ENCODE measurements at regions of chr1 and their contacts with region 1.

Region 1: GRCh38 chr1:5798151-5798730 is 194.0 kb downstream of the NPHP4 start:
- DNase-seq: no peak

Region 2: GRCh38 chr1:4137621-4138415 is 1660.4 kb before region 1 on chr1:
- in situ Hi-C with region 1: loop called (anchors 25 kb)
- DNase-seq: no peak

Region 3: GRCh38 chr1:5758000-5758858 is 40.0 kb before region 1 on chr1:
- in situ Hi-C with region 1: no loop called
- DNase-seq: no peak

Region 4: DNA sequence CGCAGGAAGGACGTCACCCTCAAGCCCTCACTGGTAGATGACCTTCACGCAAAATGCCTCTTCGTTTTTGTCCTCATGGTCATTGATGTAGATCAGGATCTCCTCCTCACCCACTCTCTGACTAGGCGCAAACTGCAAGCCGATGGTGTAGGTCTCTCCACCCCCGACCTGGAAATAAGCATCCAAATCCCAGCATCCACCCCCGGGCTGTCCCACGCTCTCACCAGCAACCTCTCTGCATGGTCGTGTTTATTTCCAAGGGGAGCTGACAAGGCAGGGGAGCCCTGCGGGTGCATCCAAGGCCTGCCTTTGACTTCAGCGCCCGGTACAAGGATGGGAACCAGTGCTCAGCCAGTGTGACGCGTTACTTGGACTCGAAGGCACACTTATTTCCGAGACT is 65.0 kb after region 1 on chr1:
- in situ Hi-C with region 1: no loop called
- DNase-seq: no peak

Region 5: GRCh38 chr1:6026095-6026809 is 228.0 kb after region 1 on chr1:
- in situ Hi-C with region 1: no loop called
- DNase-seq: no peak